HepG2 (cell line): ENCODE measurements at regions of chr2 and their contacts with region 1.

Region 1: GRCh38 chr2:19863303-19864041 is 38.3 kb downstream of the TTC32 start:
- DNase-seq: peak; percentile 76
- ATAC-seq: peak; percentile 96
- H3K4me3 ChIP-seq: peak overlapping the region; percentile 46 to 77 (median 57)
- H3K27ac ChIP-seq: peak overlapping the region; percentile 26
- H3K4me1 ChIP-seq: peaks cover 36% of the 10 kb centered on the region
- H3K27me3 ChIP-seq: peaks cover 2 to 18% of the 10 kb centered on the region in 2 experiments; a peak in 3 of 5 replicates
- CTCF ChIP-seq: peak; percentile 100
- EP300 ChIP-seq: no peak
- POLR2A ChIP-seq: peak in 1 of 2 experiments; percentile 60; a peak in 2 of 4 replicates
- RAD21 ChIP-seq: peak; percentile 100

Region 2: GRCh38 chr2:18435421-18436037 is 1427.9 kb before region 1 on chr2:
- CTCF ChIA-PET with region 1: interaction called, 6 read pairs
- POLR2A ChIA-PET with region 1: no interaction called
- in situ Hi-C with region 1: no loop called
- intact Hi-C with region 1: loop called (anchors 10 kb)
- DNase-seq: peak; percentile 58
- ATAC-seq: peak; percentile 59
- H3K4me3 ChIP-seq: no peak overlapping the region
- H3K27ac ChIP-seq: no peak overlapping the region
- H3K4me1 ChIP-seq: no peaks in the 10 kb centered on the region
- H3K27me3 ChIP-seq: 0 out of 5 replicates have a peak, but pooled peaks cover 0 to 10% of the 10 kb centered on the region in 2 experiments
- CTCF ChIP-seq: peak; percentile 76
- EP300 ChIP-seq: no peak
- POLR2A ChIP-seq: no peak
- RAD21 ChIP-seq: 0 out of 2 replicates have a peak, but pooled peaks have one; percentile 31

Region 3: DNA sequence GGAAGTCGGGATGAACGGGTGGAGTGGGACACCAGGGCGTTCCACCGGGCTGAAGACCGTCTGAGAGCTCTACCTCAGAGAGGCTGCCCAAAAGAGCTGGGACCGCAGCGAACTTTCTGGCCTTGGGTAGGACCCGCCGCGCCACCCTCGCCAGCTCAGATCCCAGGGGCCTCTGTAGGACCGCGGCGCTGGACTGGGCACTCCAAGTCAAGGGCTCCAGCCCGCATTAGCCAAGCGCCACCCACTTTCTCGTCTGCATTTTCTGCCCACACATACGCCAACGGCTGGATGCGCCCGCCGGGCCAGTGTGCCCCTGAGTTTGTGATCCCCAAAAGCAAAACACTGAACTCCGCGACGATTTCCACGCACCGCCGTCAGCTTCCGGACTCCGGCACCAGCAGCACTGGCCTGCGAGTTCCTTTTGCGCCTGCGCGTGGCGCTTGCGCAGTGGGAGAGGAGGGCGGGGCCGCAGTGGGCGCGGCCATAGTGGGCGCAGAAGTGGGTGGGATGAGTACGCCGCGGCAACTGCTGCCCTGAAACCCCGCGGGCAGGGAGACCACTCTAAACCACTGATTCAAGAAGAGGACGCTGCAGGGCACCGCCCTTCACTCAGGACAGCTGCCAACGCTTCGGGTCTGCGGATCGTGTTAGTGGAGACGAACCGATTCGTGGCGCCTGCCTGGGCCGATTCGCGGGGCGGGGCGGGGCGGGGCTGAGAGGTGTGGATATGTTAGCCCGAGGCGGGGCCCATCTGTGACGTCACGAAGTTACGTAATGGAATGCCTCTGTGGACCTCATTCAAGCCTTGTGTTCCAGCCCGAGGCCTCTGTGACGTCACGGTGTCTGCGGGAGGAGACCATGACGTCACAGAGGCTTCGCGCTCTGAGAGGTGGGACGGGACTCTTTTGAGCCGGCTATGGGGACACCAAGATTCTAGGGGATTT is 515.6 kb before region 1 on chr2:
- CTCF ChIA-PET with region 1: interaction called, 6 read pairs
- POLR2A ChIA-PET with region 1: interaction called, 3 read pairs
- in situ Hi-C with region 1: no loop called
- intact Hi-C with region 1: loop called (anchors 1 kb)
- DNase-seq: peak; percentile 92
- ATAC-seq: peak; percentile 87
- H3K4me3 ChIP-seq: peak overlapping the region; percentile 80 to 93 (median 86)
- H3K27ac ChIP-seq: peak overlapping the region; percentile 69
- H3K4me1 ChIP-seq: peaks cover 27% of the 10 kb centered on the region
- H3K27me3 ChIP-seq: no peaks in the 10 kb centered on the region; a peak in 1 of 5 replicates
- CTCF ChIP-seq: peak; percentile 17; the same call in 1 of the 2 replicates
- EP300 ChIP-seq: no peak
- POLR2A ChIP-seq: peak; percentile 97 to 99
- RAD21 ChIP-seq: peak; percentile 44

Region 4: DNA sequence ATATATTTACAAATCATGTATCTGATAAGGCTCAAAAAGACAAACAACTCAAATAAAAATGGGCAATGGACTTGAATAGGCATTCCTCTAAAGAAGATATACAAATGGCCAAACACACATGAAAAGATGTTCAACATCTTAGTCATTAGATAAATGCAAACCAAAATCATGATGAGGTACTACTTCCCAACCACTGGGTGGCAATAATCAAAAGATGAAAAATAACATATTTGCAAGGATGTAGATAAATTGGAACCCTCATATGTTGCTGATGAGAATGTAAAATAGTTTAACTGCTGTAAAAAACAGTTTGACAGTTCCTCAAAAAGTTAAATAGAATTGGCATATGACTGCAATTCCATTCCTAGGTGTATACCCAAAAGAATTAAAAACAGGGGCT is 94.0 kb before region 1 on chr2:
- CTCF ChIA-PET with region 1: interaction called, 5 read pairs
- POLR2A ChIA-PET with region 1: no interaction called
- in situ Hi-C with region 1: no loop called
- intact Hi-C with region 1: loop called (anchors 1 kb)
- DNase-seq: no peak
- ATAC-seq: no peak
- H3K4me3 ChIP-seq: no peak overlapping the region
- H3K27ac ChIP-seq: no peak overlapping the region
- H3K4me1 ChIP-seq: no peaks in the 10 kb centered on the region
- H3K27me3 ChIP-seq: no peaks in the 10 kb centered on the region
- CTCF ChIP-seq: 0 out of 2 replicates have a peak, but pooled peaks have one; percentile 9
- EP300 ChIP-seq: no peak
- POLR2A ChIP-seq: no peak
- RAD21 ChIP-seq: no peak

Region 5: GRCh38 chr2:19879120-19879519 is 15.6 kb after region 1 on chr2:
- CTCF ChIA-PET with region 1: no interaction called
- POLR2A ChIA-PET with region 1: no interaction called
- in situ Hi-C with region 1: no loop called
- intact Hi-C with region 1: no loop called
- DNase-seq: no peak
- ATAC-seq: no peak
- H3K4me3 ChIP-seq: no peak overlapping the region
- H3K27ac ChIP-seq: no peak overlapping the region
- H3K4me1 ChIP-seq: no peaks in the 10 kb centered on the region
- H3K27me3 ChIP-seq: no peaks in the 10 kb centered on the region
- CTCF ChIP-seq: no peak
- EP300 ChIP-seq: no peak
- POLR2A ChIP-seq: no peak
- RAD21 ChIP-seq: no peak